CD8-positive, alpha-beta T cell (primary cell): ENCODE measurements at regions of chr9 and their contacts with region 1.

Region 1: DNA sequence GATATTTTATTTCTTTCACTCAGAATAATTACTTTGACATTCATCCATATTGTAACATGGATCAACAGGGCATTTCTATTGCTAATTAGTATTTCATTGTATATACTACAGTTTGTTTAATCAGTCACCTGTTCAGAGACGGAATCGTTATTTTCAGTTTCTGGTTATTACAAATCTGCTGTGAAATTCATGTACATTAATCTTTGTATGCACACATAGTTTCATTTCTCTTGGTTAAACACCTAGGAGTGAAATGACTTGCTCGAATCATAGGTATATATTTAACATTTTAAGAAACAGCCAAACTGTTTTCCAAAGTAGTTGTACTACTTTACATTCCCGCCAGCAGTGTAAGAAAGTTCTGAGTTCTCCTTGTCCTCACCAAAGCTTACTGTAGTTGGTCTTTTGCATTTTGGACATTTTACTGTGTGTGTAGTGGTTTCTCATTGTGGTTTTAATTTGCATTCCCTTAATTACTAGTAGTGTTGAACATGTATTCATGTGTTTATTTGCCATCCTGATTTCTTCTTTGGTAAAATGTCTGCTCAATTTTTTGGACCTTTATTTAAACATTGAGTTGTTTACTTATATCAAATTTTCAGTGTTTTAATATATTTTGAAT is 198.2 kb downstream of the SAXO1 start:
- DNase-seq: no peak
- ATAC-seq: no peak
- H3K4me3 ChIP-seq: no peak overlapping the region
- H3K4me3 Mint-ChIP-seq: no peak overlapping the region
- H3K27ac ChIP-seq: no peak overlapping the region
- H3K27ac Mint-ChIP-seq: no peak overlapping the region
- H3K4me1 ChIP-seq: no peaks in the 10 kb centered on the region
- H3K4me1 Mint-ChIP-seq: no peaks in the 10 kb centered on the region
- H3K27me3 ChIP-seq: no peaks in the 10 kb centered on the region
- H3K27me3 Mint-ChIP-seq: no peaks in the 10 kb centered on the region
- CTCF ChIP-seq: no peak

Region 2: DNA sequence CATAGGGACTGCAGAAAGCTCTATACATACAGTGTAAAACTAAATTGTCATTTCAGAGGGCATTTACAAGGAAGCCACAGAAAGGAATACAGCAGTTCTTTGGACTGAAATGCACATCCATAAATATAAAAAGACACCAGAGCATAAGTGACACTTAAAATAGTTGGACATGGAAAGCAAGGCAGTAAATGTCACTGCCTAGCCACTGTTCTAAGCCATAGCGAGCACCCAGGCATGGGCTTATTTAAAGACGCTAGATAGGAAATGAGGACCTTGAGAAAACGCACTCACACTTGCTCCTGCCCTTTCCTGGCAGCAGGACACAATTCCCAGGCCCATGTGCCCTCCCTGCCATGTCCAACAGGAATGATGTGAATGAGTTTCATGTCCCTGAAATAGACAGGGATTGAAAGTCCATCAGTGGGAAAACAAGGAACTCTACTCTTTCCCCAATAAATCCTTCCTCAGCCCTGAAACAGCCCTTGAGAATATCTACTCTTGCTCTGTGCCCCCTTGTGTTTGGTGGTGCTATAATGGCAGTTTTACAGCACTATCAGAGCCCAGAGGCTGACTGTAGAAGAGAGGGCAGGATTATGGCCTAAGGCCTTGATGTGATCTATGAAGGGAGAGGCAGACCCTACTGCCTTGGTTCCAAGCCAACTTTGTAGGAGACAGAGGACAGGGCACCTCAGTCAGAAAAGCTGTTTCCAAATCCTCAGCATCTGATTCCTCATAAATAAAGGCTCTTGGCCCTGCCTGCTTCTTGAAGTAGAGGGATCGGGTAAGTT is 15.2 kb after region 1 on chr9:
- CTCF ChIA-PET with region 1: no interaction called
- POLR2A ChIA-PET with region 1: no interaction called
- intact Hi-C with region 1: no loop called
- DNase-seq: no peak
- ATAC-seq: no peak
- H3K4me3 ChIP-seq: no peak overlapping the region
- H3K4me3 Mint-ChIP-seq: no peak overlapping the region
- H3K27ac ChIP-seq: no peak overlapping the region
- H3K27ac Mint-ChIP-seq: no peak overlapping the region
- H3K4me1 ChIP-seq: no peaks in the 10 kb centered on the region
- H3K4me1 Mint-ChIP-seq: no peaks in the 10 kb centered on the region
- H3K27me3 ChIP-seq: no peaks in the 10 kb centered on the region
- H3K27me3 Mint-ChIP-seq: peaks cover 2% of the 10 kb centered on the region
- CTCF ChIP-seq: no peak

Region 3: GRCh38 chr9:18890372-18890771 is 55.5 kb after region 1 on chr9:
- CTCF ChIA-PET with region 1: no interaction called
- POLR2A ChIA-PET with region 1: no interaction called
- intact Hi-C with region 1: loop called in 1 of 2 experiments (anchors 10 kb)
- DNase-seq: no peak
- ATAC-seq: no peak
- H3K4me3 ChIP-seq: no peak overlapping the region
- H3K4me3 Mint-ChIP-seq: no peak overlapping the region
- H3K27ac ChIP-seq: no peak overlapping the region
- H3K27ac Mint-ChIP-seq: no peak overlapping the region
- H3K4me1 ChIP-seq: no peaks in the 10 kb centered on the region
- H3K4me1 Mint-ChIP-seq: no peaks in the 10 kb centered on the region
- H3K27me3 ChIP-seq: no peaks in the 10 kb centered on the region
- H3K27me3 Mint-ChIP-seq: no peaks in the 10 kb centered on the region
- CTCF ChIP-seq: no peak

Region 4: DNA sequence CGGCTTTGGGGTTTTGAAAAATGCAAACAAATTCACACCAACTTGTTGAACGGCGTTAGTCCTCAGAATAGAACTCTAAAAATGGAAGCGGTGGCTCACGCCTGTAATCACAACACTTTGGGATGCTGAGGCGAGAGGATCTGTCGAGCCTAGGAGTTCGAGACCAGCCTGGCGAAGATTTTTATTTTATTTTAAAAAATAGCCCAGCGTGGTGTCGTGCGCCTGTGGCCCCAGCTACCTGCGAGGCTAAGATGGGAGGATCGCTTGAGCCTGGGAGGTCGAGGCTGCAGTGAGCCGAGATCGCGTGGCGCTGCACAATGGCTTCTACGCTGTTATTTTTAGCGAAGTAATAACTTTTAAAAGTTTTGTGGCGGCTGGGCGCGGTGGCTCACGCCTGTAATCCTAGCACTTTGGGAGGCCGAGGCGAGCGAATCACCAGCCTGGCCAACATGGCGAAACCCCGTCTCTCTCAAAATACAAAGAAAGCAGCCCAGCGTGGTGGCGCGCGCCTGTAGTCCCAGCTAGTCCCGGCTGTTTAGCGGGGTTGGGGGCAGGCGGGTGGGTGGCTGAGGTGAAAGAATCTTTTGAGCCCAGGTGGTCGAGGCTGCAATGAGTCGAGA is 293.1 kb after region 1 on chr9:
- CTCF ChIA-PET with region 1: no interaction called
- POLR2A ChIA-PET with region 1: no interaction called
- intact Hi-C with region 1: no loop called
- DNase-seq: peak in 7 of 9 experiments; percentile 7 to 68 (median 46)
- ATAC-seq: peak; percentile 19
- H3K4me3 ChIP-seq: peak overlapping the region; percentile 62 to 70
- H3K4me3 Mint-ChIP-seq: peak overlapping the region; percentile 93
- H3K27ac ChIP-seq: peak overlapping the region; percentile 83 to 91
- H3K27ac Mint-ChIP-seq: peak overlapping the region; percentile 94
- H3K4me1 ChIP-seq: peaks cover 48% of the 10 kb centered on the region
- H3K4me1 Mint-ChIP-seq: peaks cover 53% of the 10 kb centered on the region
- H3K27me3 ChIP-seq: no peaks in the 10 kb centered on the region
- H3K27me3 Mint-ChIP-seq: no peaks in the 10 kb centered on the region
- CTCF ChIP-seq: no peak